Upper lobe of right lung (tissue), 1 donor: ENCODE measurements at regions of chr15 and their contacts with region 1.

Region 1: GRCh38 chr15:98160236-98160635 is 199.7 kb downstream of the ARRDC4 start:
- DNase-seq: no peak
- ATAC-seq: peak; percentile 73
- H3K4me3 ChIP-seq: no peak overlapping the region
- H3K27ac ChIP-seq: no peak overlapping the region
- H3K4me1 ChIP-seq: no peaks in the 10 kb centered on the region
- H3K27me3 ChIP-seq: no peaks in the 10 kb centered on the region
- CTCF ChIP-seq: no peak

Region 2: DNA sequence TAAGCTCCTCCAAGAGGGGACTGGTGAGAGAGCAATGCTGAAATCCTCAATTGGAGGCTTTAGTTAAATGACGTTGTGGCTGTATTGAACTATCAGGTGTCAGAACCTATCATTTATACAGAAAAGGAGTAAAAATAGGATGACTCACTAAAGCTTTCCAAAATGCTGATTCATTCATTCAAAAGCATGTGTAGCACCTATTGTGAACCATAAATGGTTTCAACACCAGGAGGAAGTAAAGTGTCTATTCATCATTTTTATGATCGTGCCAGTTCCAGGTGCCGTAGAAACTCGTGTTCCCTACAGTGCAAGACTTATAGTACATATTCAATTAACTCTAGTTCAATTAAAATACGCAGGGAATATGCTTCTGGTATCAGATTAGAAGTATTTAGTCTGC is 266.3 kb before region 1 on chr15:
- intact Hi-C with region 1: loop called (anchors 10 kb)
- DNase-seq: no peak
- ATAC-seq: no peak
- H3K4me3 ChIP-seq: no peak overlapping the region
- H3K27ac ChIP-seq: no peak overlapping the region
- H3K4me1 ChIP-seq: no peaks in the 10 kb centered on the region
- H3K27me3 ChIP-seq: no peaks in the 10 kb centered on the region
- CTCF ChIP-seq: no peak

Region 3: GRCh38 chr15:98272625-98273024 is 112.4 kb after region 1 on chr15:
- intact Hi-C with region 1: no loop called
- DNase-seq: no peak
- ATAC-seq: no peak
- H3K4me3 ChIP-seq: no peak overlapping the region
- H3K27ac ChIP-seq: no peak overlapping the region
- H3K4me1 ChIP-seq: no peaks in the 10 kb centered on the region
- H3K27me3 ChIP-seq: no peaks in the 10 kb centered on the region
- CTCF ChIP-seq: no peak